Activated naive CD4-positive, alpha-beta T cell treated with anti-CD3 and anti-CD28 coated beads, Interleukin-2, amount 10 ng/mL, durations not matched to agents 7 days and 5 days (primary cell): ENCODE measurements at regions of chr22 and their contacts with region 1.

Region 1: GRCh38 chr22:36977947-36978660 is 41.1 kb downstream of the TST start:
- DNase-seq: peak; percentile 93
- H3K4me3 Mint-ChIP-seq: peak overlapping the region; percentile 79
- H3K27ac Mint-ChIP-seq: peak overlapping the region; percentile 74
- H3K4me1 Mint-ChIP-seq: peaks cover 14% of the 10 kb centered on the region
- H3K27me3 Mint-ChIP-seq: peaks cover 46% of the 10 kb centered on the region

Region 2: DNA sequence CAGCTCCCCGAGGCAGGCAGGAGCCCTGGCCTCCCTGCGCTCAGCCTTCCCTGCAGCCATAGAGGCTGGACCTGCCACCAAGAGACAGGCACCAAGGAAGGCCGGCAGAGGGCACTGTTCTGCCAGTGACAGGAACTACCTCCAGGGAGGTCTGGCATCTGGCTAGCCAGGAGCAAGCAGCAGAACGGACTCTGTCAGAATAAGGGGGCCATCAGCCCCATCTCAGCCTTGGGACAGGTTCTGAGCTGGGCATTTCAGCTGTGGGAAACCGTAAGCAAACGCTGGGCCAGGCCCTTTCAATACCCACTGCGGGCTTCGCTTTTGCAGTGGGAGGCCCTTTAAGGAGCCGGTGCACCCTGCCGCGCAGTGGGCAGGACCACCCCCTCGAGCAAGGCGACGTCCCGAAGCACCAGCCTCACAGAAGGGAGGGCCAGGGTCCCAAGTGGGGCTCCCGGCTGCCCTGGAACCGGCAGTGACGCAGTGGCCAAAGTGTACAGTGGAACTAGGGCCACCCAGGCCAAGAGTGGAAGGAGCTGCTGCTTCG is 220.4 kb before region 1 on chr22:
- CTCF ChIA-PET with region 1: interaction called, 13 read pairs
- DNase-seq: peak; percentile 89
- H3K4me3 Mint-ChIP-seq: no peak overlapping the region
- H3K27ac Mint-ChIP-seq: no peak overlapping the region
- H3K4me1 Mint-ChIP-seq: no peaks in the 10 kb centered on the region
- H3K27me3 Mint-ChIP-seq: peaks cover 26% of the 10 kb centered on the region

Region 3: GRCh38 chr22:36775964-36776669 is 202.0 kb before region 1 on chr22 and contains the start of gene IFT27:
- CTCF ChIA-PET with region 1: interaction called, 17 read pairs
- DNase-seq: peak; percentile 99
- H3K4me3 Mint-ChIP-seq: peak within 1 kb of the TSS; percentile 81
- H3K27ac Mint-ChIP-seq: peak within 1 kb of the TSS; percentile 90
- H3K4me1 Mint-ChIP-seq: peaks cover 26% of the 10 kb centered on the region
- H3K27me3 Mint-ChIP-seq: no peaks in the 10 kb centered on the region

Region 4: DNA sequence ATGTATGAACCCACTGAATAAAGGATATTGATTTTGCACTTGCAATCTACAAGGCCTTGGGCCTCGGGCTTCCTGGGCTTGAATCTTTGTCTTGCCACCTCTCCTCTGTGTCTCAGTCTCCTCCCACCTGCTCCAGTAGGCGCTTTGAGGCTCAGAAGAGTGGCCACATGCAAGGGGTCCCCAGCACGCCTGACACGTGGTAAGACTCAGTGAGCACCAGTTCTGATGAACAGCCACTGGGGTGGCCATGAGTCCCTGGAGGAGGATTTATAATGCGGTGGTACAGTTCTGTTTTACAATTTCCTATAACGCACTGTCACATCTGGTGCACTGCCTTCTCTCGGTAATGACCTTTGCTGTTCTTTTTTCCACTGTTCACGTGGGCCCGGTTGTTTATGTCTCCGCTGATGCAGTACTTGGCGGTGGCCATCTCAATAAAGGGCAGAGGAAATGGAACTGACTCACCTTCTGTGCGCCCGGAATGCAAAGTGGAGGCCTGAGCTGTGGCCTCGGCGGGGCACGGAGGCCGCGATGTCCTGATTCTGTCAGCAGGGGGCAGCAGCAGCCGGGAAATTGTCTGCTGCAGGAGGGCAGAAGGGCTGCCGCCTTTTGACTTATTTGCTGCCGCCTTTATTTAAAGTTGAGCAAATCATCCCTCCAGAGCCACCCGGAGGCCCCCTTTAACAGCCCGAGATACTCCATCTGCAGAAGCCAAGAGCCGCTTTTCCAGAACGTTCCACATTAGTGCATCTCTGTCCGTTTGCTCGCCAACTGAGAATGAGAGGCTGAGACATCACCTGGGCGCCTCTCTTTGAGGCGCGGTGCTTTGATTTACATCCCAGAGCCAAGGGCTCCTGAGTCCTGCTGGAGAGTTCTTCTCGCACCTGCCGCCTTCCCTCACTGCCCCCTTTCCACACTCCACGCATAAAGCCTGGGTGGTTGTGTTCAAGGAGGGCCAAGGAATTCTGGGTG is 196.2 kb before region 1 on chr22:
- CTCF ChIA-PET with region 1: interaction called, 17 read pairs
- DNase-seq: peak; percentile 90
- H3K4me3 Mint-ChIP-seq: no peak overlapping the region
- H3K27ac Mint-ChIP-seq: no peak overlapping the region
- H3K4me1 Mint-ChIP-seq: peaks cover 22% of the 10 kb centered on the region
- H3K27me3 Mint-ChIP-seq: peaks cover 45% of the 10 kb centered on the region

Region 5: GRCh38 chr22:36787204-36787988 is 190.7 kb before region 1 on chr22:
- CTCF ChIA-PET with region 1: interaction called, 17 read pairs
- DNase-seq: no peak
- H3K4me3 Mint-ChIP-seq: no peak overlapping the region
- H3K27ac Mint-ChIP-seq: no peak overlapping the region
- H3K4me1 Mint-ChIP-seq: peaks cover 13% of the 10 kb centered on the region
- H3K27me3 Mint-ChIP-seq: peaks cover 49% of the 10 kb centered on the region

Region 6: DNA sequence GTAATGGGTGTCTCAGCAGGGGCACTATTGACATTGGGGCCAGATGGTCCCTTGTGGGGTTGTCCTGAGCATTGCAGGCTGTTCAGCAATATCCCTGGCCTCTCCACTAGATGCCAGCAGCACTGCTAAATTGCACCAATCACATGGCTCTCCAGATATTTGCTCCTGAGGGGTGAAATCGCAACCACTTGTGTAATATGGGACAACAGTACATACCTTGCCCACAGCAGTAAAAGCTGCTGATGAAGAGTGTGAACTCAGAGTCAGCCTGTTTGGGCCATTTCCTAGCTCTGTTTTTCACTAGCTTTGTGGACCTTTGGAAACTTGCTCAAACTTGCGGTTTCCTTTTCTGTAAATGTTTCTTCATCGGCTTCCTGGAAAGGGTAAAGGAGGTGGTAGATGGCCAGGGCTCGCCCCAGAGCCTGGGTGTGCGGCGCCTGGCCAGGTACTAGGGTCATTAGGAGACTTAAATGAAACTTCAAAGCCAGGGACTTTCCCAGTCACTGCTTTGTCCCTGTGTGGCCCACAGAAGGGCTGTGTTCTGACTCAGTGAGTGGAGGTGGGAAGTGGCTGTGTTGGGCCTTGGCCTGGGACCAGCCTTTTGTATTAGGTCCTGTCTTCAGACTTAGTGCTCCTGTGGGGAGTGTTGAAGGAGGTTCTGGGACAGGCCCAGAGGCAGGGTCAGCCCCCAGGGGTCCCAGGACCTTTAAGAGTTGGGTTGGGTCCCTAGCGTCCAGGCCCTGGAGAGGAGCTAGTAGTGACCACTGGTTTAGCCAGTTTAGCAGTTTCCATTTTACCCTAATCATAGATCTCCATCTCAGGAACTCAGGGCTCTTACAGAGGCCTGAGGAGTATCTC is 104.2 kb before region 1 on chr22:
- CTCF ChIA-PET with region 1: interaction called, 10 read pairs
- DNase-seq: no peak
- H3K4me3 Mint-ChIP-seq: no peak overlapping the region
- H3K27ac Mint-ChIP-seq: peak overlapping the region; percentile 71
- H3K4me1 Mint-ChIP-seq: peaks cover 12% of the 10 kb centered on the region
- H3K27me3 Mint-ChIP-seq: peaks cover 11% of the 10 kb centered on the region

Region 7: GRCh38 chr22:36921309-36922104 is 56.6 kb before region 1 on chr22:
- CTCF ChIA-PET with region 1: no interaction called
- DNase-seq: no peak
- H3K4me3 Mint-ChIP-seq: no peak overlapping the region
- H3K27ac Mint-ChIP-seq: no peak overlapping the region
- H3K4me1 Mint-ChIP-seq: no peaks in the 10 kb centered on the region
- H3K27me3 Mint-ChIP-seq: peaks cover 25% of the 10 kb centered on the region

Region 8: GRCh38 chr22:36953206-36954080 is 24.7 kb before region 1 on chr22:
- CTCF ChIA-PET with region 1: no interaction called
- DNase-seq: no peak
- H3K4me3 Mint-ChIP-seq: no peak overlapping the region
- H3K27ac Mint-ChIP-seq: no peak overlapping the region
- H3K4me1 Mint-ChIP-seq: no peaks in the 10 kb centered on the region
- H3K27me3 Mint-ChIP-seq: peaks cover 13% of the 10 kb centered on the region

Region 9: DNA sequence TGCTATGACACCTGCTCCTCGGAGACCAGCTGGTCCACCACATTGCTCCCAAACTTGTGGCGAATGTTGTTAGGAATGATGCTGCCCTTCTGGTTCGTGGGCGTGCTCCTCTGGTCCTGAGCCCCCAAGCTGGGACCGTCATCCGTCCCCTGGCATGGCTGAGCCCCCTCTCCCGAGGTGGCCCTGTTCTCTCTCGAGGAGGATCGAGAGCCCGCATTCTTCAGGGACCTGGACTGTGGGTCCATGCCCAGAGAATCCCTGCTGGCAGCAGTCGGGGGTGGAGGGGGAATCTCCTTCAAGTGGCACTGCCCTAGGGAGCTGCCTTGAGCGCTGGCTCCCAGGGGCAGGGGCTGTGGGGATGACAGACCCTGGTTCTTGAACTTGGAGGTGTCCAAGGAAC is 23.7 kb after region 1 on chr22:
- CTCF ChIA-PET with region 1: no interaction called
- DNase-seq: peak; percentile 15
- H3K4me3 Mint-ChIP-seq: no peak overlapping the region
- H3K27ac Mint-ChIP-seq: peak overlapping the region; percentile 66
- H3K4me1 Mint-ChIP-seq: no peaks in the 10 kb centered on the region
- H3K27me3 Mint-ChIP-seq: peaks cover 76% of the 10 kb centered on the region